Caco-2 (cell line): ENCODE measurements at regions of chr11 and their contacts with region 1.

Region 1: DNA sequence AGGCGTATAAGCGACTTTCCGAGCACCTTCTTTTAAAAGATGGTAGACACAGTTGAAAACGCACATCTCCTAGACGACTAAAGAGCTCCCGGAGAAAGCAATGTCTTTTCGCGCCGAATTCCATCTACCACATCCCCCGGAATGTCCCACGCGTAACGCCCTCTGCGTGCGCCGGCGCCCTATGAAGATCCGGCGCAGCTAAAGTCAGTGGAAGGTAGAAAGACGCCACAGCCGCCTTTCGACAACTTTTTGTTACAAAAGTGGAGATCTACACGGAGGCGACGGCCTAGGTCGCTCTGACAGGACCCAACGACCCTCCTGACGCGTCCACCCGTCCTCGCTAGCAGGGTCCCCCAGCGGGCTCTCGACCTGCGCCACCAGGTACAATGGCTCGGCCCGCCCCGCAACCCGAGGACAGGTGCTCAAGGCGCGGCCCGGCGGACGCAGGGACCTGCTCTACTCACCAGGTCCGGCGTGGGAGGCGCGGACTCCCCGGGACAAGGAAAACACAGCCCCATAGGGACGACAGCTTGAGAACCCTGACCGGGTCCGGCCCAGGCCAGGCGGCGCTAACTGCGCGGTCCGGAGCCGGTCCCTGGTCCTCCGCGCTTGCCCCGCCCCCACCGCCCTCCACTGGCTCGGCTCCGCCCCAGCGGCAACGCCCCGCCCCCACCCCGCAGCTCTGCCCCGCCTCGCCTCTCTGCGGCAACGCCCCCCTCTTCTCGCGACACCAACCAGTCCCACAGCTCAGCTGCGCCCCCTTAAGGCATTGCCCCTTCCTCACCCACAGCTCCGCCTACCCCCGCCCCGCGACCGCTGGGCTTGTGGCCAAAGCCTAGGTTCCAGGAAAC is at the start of gene SVIP:
- DNase-seq: peak; percentile 96 to 97
- H3K4me3 ChIP-seq: peak within 1 kb of the TSS; percentile 92
- H3K4me3 Mint-ChIP-seq: peak within 1 kb of the TSS; percentile 87
- H3K27ac Mint-ChIP-seq: peak within 1 kb of the TSS; percentile 66
- H3K4me1 ChIP-seq: peaks cover 14% of the 10 kb centered on the region
- H3K4me1 Mint-ChIP-seq: peaks cover 15% of the 10 kb centered on the region
- H3K27me3 ChIP-seq: no peaks in the 10 kb centered on the region
- H3K27me3 Mint-ChIP-seq: no peaks in the 10 kb centered on the region
- CTCF ChIP-seq: peak; percentile 46 to 93
- total RNA-seq, gene SVIP: 19.6 and 21.0 TPM in 2 replicates

Region 2: GRCh38 chr11:22625448-22626287 is 203.8 kb before region 1 on chr11 and contains the start of gene FANCF:
- CTCF ChIA-PET with region 1: interaction called, 5 read pairs
- POLR2A ChIA-PET with region 1: interaction called, 3 read pairs
- intact Hi-C with region 1: loop called (anchors 1 kb)
- DNase-seq: peak; percentile 95 to 98
- H3K4me3 ChIP-seq: peak within 1 kb of the TSS; percentile 88
- H3K4me3 Mint-ChIP-seq: peak within 1 kb of the TSS; percentile 97
- H3K27ac Mint-ChIP-seq: peak within 1 kb of the TSS; percentile 99
- H3K4me1 ChIP-seq: peaks cover 7% of the 10 kb centered on the region; the same call in 1 of the 2 replicates
- H3K4me1 Mint-ChIP-seq: no peaks in the 10 kb centered on the region
- H3K27me3 ChIP-seq: no peaks in the 10 kb centered on the region
- H3K27me3 Mint-ChIP-seq: no peaks in the 10 kb centered on the region
- CTCF ChIP-seq: no peak
- total RNA-seq, gene FANCF: 13.8 and 15.4 TPM in 2 replicates